GM12878 (cell line): ENCODE measurements at regions of chr1 and their contacts with region 1.

Region 1: DNA sequence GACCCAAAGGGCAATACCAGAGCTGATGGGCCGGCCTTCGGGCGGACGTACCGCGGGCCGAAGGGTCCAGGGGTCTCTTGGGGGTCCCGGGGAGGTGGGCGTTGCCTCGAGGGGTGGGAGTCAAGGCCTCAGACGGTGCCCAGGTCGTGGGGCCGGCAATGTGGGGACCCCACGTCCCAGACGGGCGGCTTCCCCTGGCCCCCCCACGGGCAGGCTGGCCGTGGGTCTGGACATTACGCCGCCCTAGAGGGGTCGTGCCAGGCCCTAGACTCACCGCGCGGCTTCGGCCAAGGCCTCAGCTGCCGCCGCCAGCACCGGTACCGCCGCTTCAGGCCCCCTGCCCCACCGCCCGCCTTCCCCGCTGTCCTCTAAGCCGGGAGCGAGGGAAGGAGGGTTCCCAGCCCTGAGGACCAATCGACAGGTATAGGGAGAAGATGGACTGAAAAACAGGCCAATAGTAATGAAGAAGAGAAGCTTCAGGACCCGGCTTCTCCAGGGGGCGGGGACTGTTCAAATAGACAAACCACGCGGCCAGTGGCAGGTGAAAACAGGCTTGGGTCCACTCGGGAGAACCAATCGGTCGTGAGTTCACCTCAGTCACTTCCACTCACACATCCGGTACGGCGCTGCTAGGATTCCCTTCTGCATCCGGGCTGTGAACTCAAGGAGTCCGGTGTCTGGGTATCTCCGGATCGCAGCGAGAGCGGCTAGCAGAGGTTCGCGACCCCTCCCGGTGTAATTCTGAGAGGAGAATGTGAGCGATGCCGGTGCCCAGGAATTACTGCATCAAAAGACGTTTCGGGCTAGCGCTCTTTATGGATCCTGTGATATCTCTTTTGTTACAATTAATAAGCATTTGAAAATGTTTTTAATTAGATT is at the start of gene MTOR:
- DNase-seq: peak; percentile 99
- ATAC-seq: peak; percentile 99
- H3K4me3 ChIP-seq: peak within 1 kb of the TSS; percentile 92
- H3K27ac ChIP-seq: peak within 1 kb of the TSS; percentile 66
- H3K4me1 ChIP-seq: no peaks in the 10 kb centered on the region
- H3K27me3 ChIP-seq: no peaks in the 10 kb centered on the region
- CTCF ChIP-seq: peak in 2 of 3 experiments; percentile 0 to 18; a peak in 1 of 6 replicates
- EP300 ChIP-seq: no peak
- POLR2A ChIP-seq: peak; percentile 90
- RAD21 ChIP-seq: peak; percentile 10; the same call in 1 of the 2 replicates
- polyA plus RNA-seq, gene MTOR: 6.6 to 7.5 TPM

Region 2: GRCh38 chr1:11272832-11273594 is 10.6 kb after region 1 on chr1 and contains the start of gene UBIAD1:
- CTCF ChIA-PET with region 1: no interaction called
- POLR2A ChIA-PET with region 1: interaction called, 20 read pairs
- RAD21 ChIA-PET with region 1: interaction called, 7 read pairs
- SMC1A ChIA-PET with region 1: interaction called, 4 read pairs
- in situ Hi-C with region 1: no loop called
- intact Hi-C with region 1: no loop called
- DNase-seq: peak; percentile 19
- ATAC-seq: peak; percentile 94
- H3K4me3 ChIP-seq: peak within 1 kb of the TSS; percentile 87
- H3K27ac ChIP-seq: peak within 1 kb of the TSS; percentile 93
- H3K4me1 ChIP-seq: no peaks in the 10 kb centered on the region
- H3K27me3 ChIP-seq: no peaks in the 10 kb centered on the region
- CTCF ChIP-seq: no peak
- EP300 ChIP-seq: no peak
- POLR2A ChIP-seq: peak; percentile 94
- RAD21 ChIP-seq: no peak
- polyA plus RNA-seq, gene UBIAD1: 4.5 to 5.7 TPM

Region 3: GRCh38 chr1:11364170-11364569 is 101.8 kb after region 1 on chr1:
- CTCF ChIA-PET with region 1: no interaction called
- POLR2A ChIA-PET with region 1: no interaction called
- RAD21 ChIA-PET with region 1: no interaction called
- SMC1A ChIA-PET with region 1: no interaction called
- in situ Hi-C with region 1: no loop called
- intact Hi-C with region 1: no loop called
- DNase-seq: no peak
- ATAC-seq: peak; percentile 41; the same call in 1 of the 3 replicates
- H3K4me3 ChIP-seq: no peak overlapping the region
- H3K27ac ChIP-seq: no peak overlapping the region
- H3K4me1 ChIP-seq: no peaks in the 10 kb centered on the region
- H3K27me3 ChIP-seq: no peaks in the 10 kb centered on the region
- CTCF ChIP-seq: peak; percentile 37 to 53 (median 43); a peak in 4 of 6 replicates
- EP300 ChIP-seq: no peak
- POLR2A ChIP-seq: no peak
- RAD21 ChIP-seq: peak; percentile 56

Region 4: DNA sequence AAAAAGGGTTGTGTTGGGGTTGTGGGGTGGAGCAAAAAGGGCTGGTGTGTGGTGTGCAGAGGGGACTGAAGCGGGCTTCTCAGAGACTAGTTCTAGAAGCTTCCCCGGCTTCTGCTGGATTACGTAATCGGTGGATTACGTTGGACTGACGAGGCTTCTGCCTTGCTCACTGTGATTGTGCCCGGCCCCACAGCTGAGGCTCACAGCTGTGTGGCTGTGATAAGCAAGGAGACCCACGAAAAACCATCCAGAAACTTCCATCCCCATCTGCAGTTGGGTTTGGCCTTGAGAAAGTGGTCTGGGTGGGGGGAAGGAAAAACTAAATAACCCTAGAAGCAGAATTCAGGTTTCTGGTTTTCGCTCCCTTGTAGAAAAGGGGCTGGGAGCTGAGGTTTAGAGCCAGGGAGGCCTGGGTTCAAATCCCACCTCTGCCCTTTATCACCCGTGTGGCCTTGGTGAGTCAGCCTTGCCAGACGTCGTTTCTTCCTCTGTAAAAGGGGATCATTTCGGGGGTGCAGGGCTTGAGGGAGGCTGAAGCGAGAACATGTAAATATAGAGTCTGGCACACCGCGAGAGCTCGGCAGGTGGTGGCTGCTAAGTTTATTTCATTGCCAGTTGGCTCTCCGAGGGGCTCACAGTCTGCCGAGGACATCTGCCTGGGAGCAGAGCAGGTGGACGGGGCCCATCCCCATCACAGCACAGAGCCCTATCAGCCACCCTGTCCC is 186.1 kb after region 1 on chr1:
- CTCF ChIA-PET with region 1: no interaction called
- POLR2A ChIA-PET with region 1: no interaction called
- RAD21 ChIA-PET with region 1: no interaction called
- SMC1A ChIA-PET with region 1: no interaction called
- in situ Hi-C with region 1: no loop called
- intact Hi-C with region 1: no loop called
- DNase-seq: no peak
- ATAC-seq: no peak
- H3K4me3 ChIP-seq: no peak overlapping the region
- H3K27ac ChIP-seq: no peak overlapping the region
- H3K4me1 ChIP-seq: no peaks in the 10 kb centered on the region
- H3K27me3 ChIP-seq: peaks cover 0 to 4% of the 10 kb centered on the region in 2 experiments; a peak in 2 of 4 replicates
- CTCF ChIP-seq: no peak
- EP300 ChIP-seq: no peak
- POLR2A ChIP-seq: no peak
- RAD21 ChIP-seq: no peak